ENCODE measurements at regions of chr6 and their contacts with region 1.

Region 1: GRCh38 chr6:30326526-30327260 is at the start of gene TRIM39:
- DNase-seq: peak; percentile 85
- H3K4me3 Mint-ChIP-seq: peak within 1 kb of the TSS; percentile 94
- H3K27ac Mint-ChIP-seq: peak within 1 kb of the TSS; percentile 93
- H3K4me1 Mint-ChIP-seq: peaks cover 47% of the 10 kb centered on the region
- H3K27me3 Mint-ChIP-seq: no peaks in the 10 kb centered on the region
- total RNA-seq, gene TRIM39: 11.2 and 13.0 TPM in 2 replicates

Region 2: DNA sequence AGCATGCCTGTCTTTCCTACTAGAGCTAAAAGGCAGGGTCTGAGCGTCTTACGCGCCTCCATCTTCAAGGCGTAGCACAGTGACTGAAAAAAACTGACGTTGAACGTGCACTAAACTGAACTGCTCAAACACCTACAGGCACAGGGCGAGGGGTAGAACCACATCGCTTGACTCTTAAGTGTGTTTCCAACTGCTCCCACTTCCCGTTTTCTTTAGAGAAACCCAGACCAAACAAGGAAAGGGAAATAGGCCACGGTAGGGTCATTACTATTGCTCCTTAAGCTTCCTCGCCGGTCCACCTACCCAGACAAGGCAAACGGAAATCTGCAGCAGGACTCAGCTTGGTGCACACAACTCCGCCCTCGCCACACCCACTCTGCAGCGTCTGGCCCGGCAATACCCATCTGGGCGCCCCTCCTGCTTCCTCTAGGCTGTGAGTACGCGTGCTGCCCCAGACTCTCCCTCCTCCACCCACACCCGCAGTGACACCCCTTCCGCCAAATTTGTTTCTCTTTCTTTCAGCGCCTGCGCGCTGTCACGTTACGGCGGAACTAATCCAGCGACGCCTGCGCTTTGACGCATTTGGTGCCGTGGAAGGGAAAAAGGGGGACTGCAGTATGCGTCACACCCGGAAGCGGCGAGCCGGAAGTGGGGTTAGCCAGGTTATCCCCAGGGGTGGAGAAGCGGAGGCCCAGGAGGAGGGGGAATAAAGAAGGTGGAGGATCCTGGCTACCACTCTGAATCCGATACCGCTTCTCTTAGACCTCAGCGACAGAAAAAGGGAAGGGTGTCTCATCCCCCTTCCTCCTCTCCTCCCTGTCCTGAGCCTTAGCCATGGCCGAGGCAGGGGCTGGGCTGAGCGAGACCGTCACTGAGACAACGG is 259.9 kb before region 1 on chr6 and contains the start of gene PPP1R11:
- intact Hi-C with region 1: loop called (anchors 5 kb)
- DNase-seq: peak; percentile 99
- H3K4me3 Mint-ChIP-seq: peak within 1 kb of the TSS; percentile 93
- H3K27ac Mint-ChIP-seq: peak within 1 kb of the TSS; percentile 96
- H3K4me1 Mint-ChIP-seq: peaks cover 42% of the 10 kb centered on the region
- H3K27me3 Mint-ChIP-seq: peaks cover 10% of the 10 kb centered on the region
- total RNA-seq, gene PPP1R11: 55.9 and 56.1 TPM in 2 replicates

Region 3: GRCh38 chr6:30212865-30213666 is 113.6 kb before region 1 on chr6 and contains the start of gene TRIM26:
- intact Hi-C with region 1: loop called (anchors 1 kb)
- DNase-seq: peak; percentile 98
- H3K4me3 Mint-ChIP-seq: peak within 1 kb of the TSS; percentile 96
- H3K27ac Mint-ChIP-seq: peak within 1 kb of the TSS; percentile 97
- H3K4me1 Mint-ChIP-seq: peaks cover 48% of the 10 kb centered on the region
- H3K27me3 Mint-ChIP-seq: no peaks in the 10 kb centered on the region
- total RNA-seq, gene TRIM26: 49.9 and 51.5 TPM in 2 replicates

Region 4: GRCh38 chr6:30344868-30345671 is 18.4 kb after region 1 on chr6 and contains the start of gene RPP21:
- intact Hi-C with region 1: loop called (anchors 1 kb)
- DNase-seq: peak; percentile 84
- H3K4me3 Mint-ChIP-seq: peak within 1 kb of the TSS; percentile 88
- H3K27ac Mint-ChIP-seq: peak within 1 kb of the TSS; percentile 77
- H3K4me1 Mint-ChIP-seq: peaks cover 34% of the 10 kb centered on the region
- H3K27me3 Mint-ChIP-seq: peaks cover 16% of the 10 kb centered on the region
- total RNA-seq, gene RPP21: 40.6 and 41.9 TPM in 2 replicates

Region 5: DNA sequence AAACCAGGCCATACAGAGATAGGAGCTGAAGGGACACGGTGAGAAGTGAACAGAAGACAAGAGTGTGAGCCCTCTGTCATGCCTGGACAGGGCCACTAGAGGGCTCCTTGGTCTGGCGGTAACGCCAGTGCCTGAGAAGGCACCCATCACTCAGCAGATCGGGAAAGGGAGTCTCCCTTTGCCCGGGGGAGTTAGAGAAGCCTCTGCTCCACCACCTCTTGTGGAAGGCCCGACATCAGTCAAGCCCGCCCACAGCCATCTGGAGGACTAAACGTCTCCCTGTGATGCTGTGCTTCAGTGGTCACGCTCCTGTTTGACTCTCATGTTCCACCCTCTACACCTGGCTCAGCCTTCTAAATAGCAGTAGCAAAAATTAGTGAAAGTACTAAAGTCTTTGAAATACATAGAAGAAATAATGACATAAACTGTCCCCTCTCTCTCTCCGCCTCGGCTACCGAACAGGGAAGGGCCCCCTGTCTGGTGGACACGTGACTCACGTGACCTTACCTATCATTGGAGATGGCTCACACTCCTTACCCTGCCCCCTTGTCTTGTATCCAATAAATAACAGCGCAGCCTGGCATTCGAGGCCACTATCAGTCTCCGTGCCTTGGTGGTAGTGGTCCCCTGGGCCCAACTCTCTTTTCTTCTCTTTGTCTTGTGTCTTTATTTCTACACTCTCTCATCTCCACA is 85.0 kb after region 1 on chr6:
- intact Hi-C with region 1: no loop called
- DNase-seq: peak; percentile 44
- H3K4me3 Mint-ChIP-seq: no peak overlapping the region
- H3K27ac Mint-ChIP-seq: no peak overlapping the region
- H3K4me1 Mint-ChIP-seq: peaks cover 6% of the 10 kb centered on the region
- H3K27me3 Mint-ChIP-seq: peaks cover 65% of the 10 kb centered on the region

Region 6: GRCh38 chr6:30571075-30571768 is 244.5 kb after region 1 on chr6 and contains the start of gene ABCF1:
- intact Hi-C with region 1: loop called (anchors 10 kb)
- DNase-seq: peak; percentile 99
- H3K4me3 Mint-ChIP-seq: peak within 1 kb of the TSS; percentile 91
- H3K27ac Mint-ChIP-seq: peak within 1 kb of the TSS; percentile 92
- H3K4me1 Mint-ChIP-seq: peaks cover 56% of the 10 kb centered on the region
- H3K27me3 Mint-ChIP-seq: no peaks in the 10 kb centered on the region
- total RNA-seq, gene ABCF1: 102 and 112 TPM in 2 replicates

Region 7: DNA sequence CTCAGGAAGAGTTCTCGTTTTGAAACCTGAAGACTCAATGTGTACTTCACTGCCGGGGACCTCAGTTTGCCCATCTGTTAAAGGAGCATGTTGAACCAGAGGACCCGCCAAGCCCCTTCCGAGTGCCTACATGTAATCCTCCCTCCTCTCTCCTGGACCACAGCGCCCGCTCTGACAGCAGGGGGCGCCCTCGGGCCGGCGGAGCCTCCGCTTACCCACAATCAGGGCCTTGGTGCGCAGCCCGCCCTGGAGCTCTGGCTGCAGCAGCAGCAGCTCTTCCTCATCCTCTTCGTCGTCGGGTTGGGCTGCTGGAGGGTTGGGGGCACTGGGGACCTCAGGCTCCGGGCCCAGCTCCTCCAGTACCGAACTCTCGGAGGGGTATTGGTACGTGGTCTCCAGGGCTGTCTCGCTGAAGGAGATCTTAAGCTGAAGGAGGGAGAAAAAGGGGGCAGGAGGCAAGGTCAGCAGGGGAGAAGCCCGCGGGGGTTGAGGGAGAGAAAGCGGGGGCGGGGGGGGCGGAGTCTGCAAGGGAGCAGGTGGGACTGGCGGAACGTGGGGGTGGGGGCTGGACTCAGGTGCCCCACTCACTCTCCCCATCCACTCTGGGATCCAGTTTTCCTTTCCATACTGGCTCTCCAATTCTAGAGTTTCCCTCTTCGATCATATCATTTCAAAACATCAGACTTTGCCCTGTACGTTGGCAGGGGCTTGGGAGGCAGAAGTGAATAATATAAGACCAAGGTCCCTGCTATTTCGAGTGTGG is 352.5 kb after region 1 on chr6:
- intact Hi-C with region 1: loop called (anchors 5 kb)
- DNase-seq: peak; percentile 86
- H3K4me3 Mint-ChIP-seq: peak overlapping the region; percentile 97
- H3K27ac Mint-ChIP-seq: peak overlapping the region; percentile 75
- H3K4me1 Mint-ChIP-seq: peaks cover 26% of the 10 kb centered on the region
- H3K27me3 Mint-ChIP-seq: no peaks in the 10 kb centered on the region

Measured in activated T-helper 2 cell treated with anti-CD3 and anti-CD28 coated beads, Interferon-gamma antibody, Interleukin-2, Interleukin-4, amounts not matched to agents 10 μg/mL and 5 μg/mL and 100 μg/mL, durations not matched to agents 14 hours and 24 hours and 36 hours (primary cell).